Spleen (tissue), 13 donors: ENCODE measurements at regions of chr4 and their contacts with region 1.

Region 1: GRCh38 chr4:55321707-55322264 is 24.3 kb upstream of the SRD5A3 start:
- DNase-seq: no peak
- H3K4me3 ChIP-seq: no peak overlapping the region
- H3K27ac ChIP-seq: no peak overlapping the region
- H3K4me1 ChIP-seq: no peaks in the 10 kb centered on the region
- H3K27me3 ChIP-seq: no peaks in the 10 kb centered on the region
- CTCF ChIP-seq: peak in 7 of 11 experiments; percentile 28 to 54 (median 43)
- POLR2A ChIP-seq: no peak

Region 2: GRCh38 chr4:54971474-54971950 is 350.3 kb before region 1 on chr4:
- intact Hi-C with region 1: loop called (anchors 10 kb)
- DNase-seq: no peak
- H3K4me3 ChIP-seq: no peak overlapping the region
- H3K27ac ChIP-seq: no peak overlapping the region
- H3K4me1 ChIP-seq: peaks cover 0 to 6% (median 0%) of the 10 kb centered on the region in 6 donors
- H3K27me3 ChIP-seq: peaks cover 0 to 5% (median 0%) of the 10 kb centered on the region in 7 donors
- CTCF ChIP-seq: peak in 10 of 11 experiments; percentile 14 to 68 (median 48)
- POLR2A ChIP-seq: no peak

Region 3: GRCh38 chr4:55184600-55185523 is 136.9 kb before region 1 on chr4:
- intact Hi-C with region 1: loop called (anchors 10 kb)
- DNase-seq: no peak
- H3K4me3 ChIP-seq: no peak overlapping the region
- H3K27ac ChIP-seq: no peak overlapping the region
- H3K4me1 ChIP-seq: peaks cover 0 to 13% (median 0%) of the 10 kb centered on the region in 6 donors
- H3K27me3 ChIP-seq: peaks cover 0 to 25% (median 0%) of the 10 kb centered on the region in 7 donors
- CTCF ChIP-seq: peak in 7 of 11 experiments; percentile 20 to 45 (median 33)
- POLR2A ChIP-seq: no peak